SK-N-SH (cell line): ENCODE measurements at regions of chr2 and their contacts with region 1.

Region 1: GRCh38 chr2:143171532-143172216 is 42.5 kb downstream of the ARHGAP15 start:
- DNase-seq: no peak
- H3K4me3 ChIP-seq: no peak overlapping the region
- H3K27ac ChIP-seq: no peak overlapping the region
- H3K4me1 ChIP-seq: no peaks in the 10 kb centered on the region
- H3K27me3 ChIP-seq: no peaks in the 10 kb centered on the region
- CTCF ChIP-seq: peak; percentile 45
- EP300 ChIP-seq: no peak
- RAD21 ChIP-seq: peak; percentile 65

Region 2: DNA sequence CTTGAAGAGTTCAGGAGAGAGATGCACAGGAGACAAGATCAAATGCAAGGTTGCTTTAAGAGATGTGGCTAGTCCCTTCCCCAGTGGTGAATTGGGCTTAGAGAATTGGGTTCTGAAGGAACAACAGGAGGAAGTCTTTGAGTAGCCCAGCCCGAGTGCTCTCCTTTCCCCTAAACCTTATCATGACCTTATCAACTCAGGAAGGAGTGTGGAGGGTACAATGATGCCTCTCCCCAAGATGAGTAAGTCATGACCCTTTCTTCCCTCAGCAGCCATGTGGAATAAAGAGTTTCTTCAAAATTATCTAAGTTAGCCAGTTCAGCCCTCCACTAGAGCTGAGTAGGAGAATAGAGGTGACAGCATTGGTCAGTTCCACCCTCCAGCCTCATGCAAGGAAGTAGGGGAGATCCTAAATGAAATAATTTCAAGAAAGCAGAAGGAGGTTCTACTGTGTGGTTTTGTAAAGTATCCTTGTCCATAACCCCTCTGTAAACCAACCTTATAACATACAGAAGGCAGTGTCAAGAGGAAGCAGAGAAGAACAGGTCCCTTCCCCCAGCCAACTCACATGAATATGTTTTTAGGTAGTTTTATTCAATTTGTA is 45.9 kb after region 1 on chr2:
- CTCF ChIA-PET with region 1: interaction called, 17 read pairs
- POLR2A ChIA-PET with region 1: no interaction called
- DNase-seq: no peak
- H3K4me3 ChIP-seq: no peak overlapping the region
- H3K27ac ChIP-seq: no peak overlapping the region
- H3K4me1 ChIP-seq: no peaks in the 10 kb centered on the region; a peak in 1 of 4 replicates
- H3K27me3 ChIP-seq: no peaks in the 10 kb centered on the region
- CTCF ChIP-seq: no peak
- EP300 ChIP-seq: no peak
- RAD21 ChIP-seq: no peak

Region 3: DNA sequence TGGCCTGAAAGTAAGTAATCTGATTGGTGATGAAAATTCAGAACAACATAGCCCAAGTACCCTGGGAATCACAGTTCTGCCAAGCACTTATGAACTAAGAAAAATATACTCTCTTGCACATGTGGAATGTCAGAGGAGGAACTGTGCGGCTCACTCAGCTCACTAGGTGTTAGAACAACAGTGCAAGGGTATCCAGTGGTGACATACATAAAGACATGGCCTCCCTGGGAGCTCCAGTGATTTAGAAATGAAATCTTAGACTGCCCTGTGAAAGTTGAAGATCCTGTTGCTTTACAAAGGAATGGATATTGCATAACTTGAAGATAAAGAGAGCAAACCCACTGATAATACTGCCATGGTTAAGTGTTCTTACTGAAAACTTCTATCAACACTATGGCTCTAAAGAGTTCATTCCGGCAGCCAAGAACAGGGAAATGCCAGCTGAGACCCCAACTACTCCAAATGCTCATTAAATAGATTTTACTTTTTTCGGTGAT is 203.8 kb after region 1 on chr2:
- CTCF ChIA-PET with region 1: no interaction called
- POLR2A ChIA-PET with region 1: no interaction called
- DNase-seq: no peak
- H3K4me3 ChIP-seq: no peak overlapping the region
- H3K27ac ChIP-seq: no peak overlapping the region
- H3K4me1 ChIP-seq: no peaks in the 10 kb centered on the region
- H3K27me3 ChIP-seq: no peaks in the 10 kb centered on the region
- CTCF ChIP-seq: no peak
- EP300 ChIP-seq: no peak
- RAD21 ChIP-seq: no peak